ENCODE measurements at regions of chr12 and their contacts with region 1.

Region 1: DNA sequence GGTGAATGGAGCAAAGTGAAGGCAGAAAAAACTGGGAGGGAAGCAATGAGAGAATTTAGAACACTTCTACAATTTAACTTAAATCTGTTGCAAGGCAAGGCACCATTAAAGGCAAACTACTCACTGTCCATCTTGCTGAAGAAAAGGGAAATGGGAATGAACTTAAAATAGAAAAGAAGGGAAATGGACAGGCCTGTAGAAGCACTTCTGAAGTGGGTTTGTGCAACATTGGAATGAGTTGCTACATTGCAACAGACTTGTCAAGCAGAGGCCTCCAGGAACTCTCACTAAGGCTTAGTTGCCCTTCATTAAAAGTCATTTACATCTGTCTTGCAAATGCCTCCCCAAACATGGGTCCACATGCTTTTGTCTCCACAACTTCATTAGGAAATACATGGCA is 13.7 kb upstream of the OR10AD1 start:
- DNase-seq: no peak
- H3K4me3 ChIP-seq: no peak overlapping the region
- H3K27ac ChIP-seq: peak overlapping the region in 3 of 4 donors; percentile 81 to 88 (median 86)
- H3K4me1 ChIP-seq: peaks cover 0 to 43% (median 13%) of the 10 kb centered on the region in 4 donors
- H3K27me3 ChIP-seq: no peaks in the 10 kb centered on the region
- CTCF ChIP-seq: no peak
- EP300 ChIP-seq: no peak
- POLR2A ChIP-seq: no peak

Region 2: DNA sequence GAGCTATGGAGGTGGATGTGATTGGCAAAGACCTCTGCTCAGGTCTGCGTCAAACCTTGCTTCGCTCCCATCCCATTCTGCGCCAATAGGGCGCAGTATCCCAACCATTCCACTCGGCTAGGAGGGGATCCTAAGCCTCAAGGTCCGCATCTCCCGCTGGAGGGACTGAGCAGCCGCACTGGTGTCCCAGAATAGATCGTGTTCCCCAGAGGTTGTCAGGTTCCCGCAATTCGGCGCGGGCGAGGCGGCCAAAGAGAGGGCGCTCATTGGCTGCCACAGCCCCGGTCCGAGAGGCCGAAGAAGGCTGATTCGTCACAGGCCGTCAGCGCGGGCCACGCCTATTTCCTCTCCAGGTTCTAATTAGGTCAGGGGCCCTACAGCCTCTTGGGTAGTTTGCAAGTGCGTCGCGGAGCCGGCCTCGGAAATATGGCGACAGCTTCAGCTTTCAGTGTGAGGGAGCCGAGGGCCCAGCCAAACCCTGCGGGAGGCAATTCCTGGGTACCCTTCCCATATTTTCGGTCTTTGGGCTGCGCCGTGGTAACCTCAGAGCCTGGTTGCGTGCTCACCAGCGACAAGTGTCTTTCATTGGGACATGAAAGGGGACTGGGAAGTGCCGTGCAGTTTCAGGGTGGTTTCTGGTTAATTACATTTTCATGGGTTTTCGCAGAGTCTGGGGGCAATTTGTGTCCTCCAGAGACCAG is 18.7 kb before region 1 on chr12:
- intact Hi-C with region 1: loop called (anchors 2 kb)
- DNase-seq: peak; percentile 99
- H3K4me3 ChIP-seq: peak overlapping the region; percentile 51 to 75 (median 62)
- H3K27ac ChIP-seq: peak overlapping the region; percentile 89 to 98 (median 94)
- H3K4me1 ChIP-seq: peaks cover 0 to 31% (median 28%) of the 10 kb centered on the region in 4 donors
- H3K27me3 ChIP-seq: no peaks in the 10 kb centered on the region
- CTCF ChIP-seq: no peak
- EP300 ChIP-seq: peak in 1 of 4 donors; percentile 54
- POLR2A ChIP-seq: peak; percentile 96

Region 3: GRCh38 chr12:48472259-48472658 is 255.5 kb after region 1 on chr12 and contains the start of gene ANP32D:
- intact Hi-C with region 1: no loop called
- DNase-seq: no peak
- H3K4me3 ChIP-seq: no peak within 1 kb of the TSS
- H3K27ac ChIP-seq: no peak within 1 kb of the TSS
- H3K4me1 ChIP-seq: no peaks in the 10 kb centered on the region
- H3K27me3 ChIP-seq: no peaks in the 10 kb centered on the region
- CTCF ChIP-seq: no peak
- EP300 ChIP-seq: no peak
- POLR2A ChIP-seq: no peak
- total RNA-seq, gene ANP32D: 0.82 to 3.9 (median 1.9) TPM in 3 of 4 donors, not detected in the other

Region 4: GRCh38 chr12:48814262-48815125 is 597.7 kb after region 1 on chr12:
- intact Hi-C with region 1: loop called (anchors 10 kb)
- DNase-seq: peak; percentile 94
- H3K4me3 ChIP-seq: peak overlapping the region; percentile 62 to 86 (median 78)
- H3K27ac ChIP-seq: peak overlapping the region; percentile 86 to 94 (median 91)
- H3K4me1 ChIP-seq: peaks cover 0 to 65% (median 50%) of the 10 kb centered on the region in 4 donors
- H3K27me3 ChIP-seq: no peaks in the 10 kb centered on the region
- CTCF ChIP-seq: peak; percentile 92 to 100 (median 96)
- EP300 ChIP-seq: no peak
- POLR2A ChIP-seq: peak in 1 of 2 donors; percentile 8